CD14-positive monocyte (primary cell): ENCODE measurements at regions of chr21 and their contacts with region 1.

Region 1: GRCh38 chr21:42973991-42974831 is at the start of gene PKNOX1:
- DNase-seq: peak; percentile 98 to 99 (median 99)
- H3K4me3 ChIP-seq: peak within 1 kb of the TSS; percentile 84 to 91 (median 89)
- H3K4me3 Mint-ChIP-seq: peak within 1 kb of the TSS; percentile 93 to 94
- H3K27ac ChIP-seq: peak within 1 kb of the TSS; percentile 74 to 90
- H3K27ac Mint-ChIP-seq: peak within 1 kb of the TSS; percentile 84 to 96 (median 92)
- H3K4me1 ChIP-seq: peaks cover 13 to 21% of the 10 kb centered on the region in 2 donors
- H3K4me1 Mint-ChIP-seq: peaks cover 19% of the 10 kb centered on the region
- H3K27me3 ChIP-seq: no peaks in the 10 kb centered on the region
- H3K27me3 Mint-ChIP-seq: peaks cover 0 to 2% (median 1%) of the 10 kb centered on the region in 3 donors
- CTCF ChIP-seq: no peak
- polyA plus RNA-seq, gene PKNOX1: 9.2 to 11.8 (median 9.9) TPM

Region 2: DNA sequence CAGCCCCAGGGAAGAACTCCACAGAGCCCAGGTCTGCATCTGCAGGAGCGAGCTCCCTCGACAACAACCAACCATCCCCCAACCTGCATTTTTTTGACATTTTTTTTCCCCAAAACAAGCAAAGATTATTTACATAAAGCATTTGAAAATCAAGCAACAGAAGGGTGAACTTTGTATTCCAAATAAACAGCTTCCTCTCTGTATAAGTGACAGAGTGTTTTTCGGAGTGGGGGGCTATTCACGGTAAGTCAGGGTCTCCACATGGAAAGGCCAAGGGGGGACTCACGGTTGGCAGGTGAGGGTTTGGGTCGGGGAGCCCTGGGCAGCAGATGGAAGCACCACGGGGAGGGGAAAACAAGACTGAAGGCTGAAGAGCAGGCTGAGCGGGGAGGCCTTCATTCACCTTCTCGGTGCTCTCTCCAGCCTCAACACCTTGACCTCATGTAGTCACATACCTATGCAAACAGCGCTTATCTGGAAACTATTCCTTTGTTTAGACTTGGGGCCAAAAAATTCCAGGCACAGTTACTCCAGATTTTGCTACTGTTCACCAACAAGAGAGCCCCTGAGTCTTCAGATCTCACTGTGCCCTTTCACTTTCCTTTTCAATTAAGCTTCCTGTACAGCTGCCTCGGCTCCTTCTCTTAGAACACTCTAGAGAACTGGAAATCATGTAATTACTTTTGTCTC is 1047.9 kb before region 1 on chr21:
- intact Hi-C with region 1: no loop called
- DNase-seq: peak in 2 of 3 donors; percentile 54 to 58
- H3K4me3 ChIP-seq: peak overlapping the region; percentile 42 to 74 (median 42)
- H3K4me3 Mint-ChIP-seq: peak overlapping the region; percentile 88 to 94
- H3K27ac ChIP-seq: peak overlapping the region; percentile 70 to 94
- H3K27ac Mint-ChIP-seq: peak overlapping the region; percentile 95 to 100 (median 98)
- H3K4me1 ChIP-seq: peaks cover 49 to 53% of the 10 kb centered on the region in 2 donors
- H3K4me1 Mint-ChIP-seq: peaks cover 70% of the 10 kb centered on the region
- H3K27me3 ChIP-seq: no peaks in the 10 kb centered on the region
- H3K27me3 Mint-ChIP-seq: peaks cover under 1 to 4% (median 3%) of the 10 kb centered on the region in 3 donors
- CTCF ChIP-seq: no peak

Region 3: GRCh38 chr21:42695697-42696380 is 278.4 kb before region 1 on chr21:
- intact Hi-C with region 1: no loop called
- DNase-seq: no peak
- H3K4me3 ChIP-seq: no peak overlapping the region
- H3K4me3 Mint-ChIP-seq: no peak overlapping the region
- H3K27ac ChIP-seq: no peak overlapping the region
- H3K27ac Mint-ChIP-seq: no peak overlapping the region
- H3K4me1 ChIP-seq: no peaks in the 10 kb centered on the region
- H3K4me1 Mint-ChIP-seq: no peaks in the 10 kb centered on the region
- H3K27me3 ChIP-seq: no peaks in the 10 kb centered on the region
- H3K27me3 Mint-ChIP-seq: peaks cover 0 to 1% (median 0%) of the 10 kb centered on the region in 3 donors
- CTCF ChIP-seq: no peak

Region 4: DNA sequence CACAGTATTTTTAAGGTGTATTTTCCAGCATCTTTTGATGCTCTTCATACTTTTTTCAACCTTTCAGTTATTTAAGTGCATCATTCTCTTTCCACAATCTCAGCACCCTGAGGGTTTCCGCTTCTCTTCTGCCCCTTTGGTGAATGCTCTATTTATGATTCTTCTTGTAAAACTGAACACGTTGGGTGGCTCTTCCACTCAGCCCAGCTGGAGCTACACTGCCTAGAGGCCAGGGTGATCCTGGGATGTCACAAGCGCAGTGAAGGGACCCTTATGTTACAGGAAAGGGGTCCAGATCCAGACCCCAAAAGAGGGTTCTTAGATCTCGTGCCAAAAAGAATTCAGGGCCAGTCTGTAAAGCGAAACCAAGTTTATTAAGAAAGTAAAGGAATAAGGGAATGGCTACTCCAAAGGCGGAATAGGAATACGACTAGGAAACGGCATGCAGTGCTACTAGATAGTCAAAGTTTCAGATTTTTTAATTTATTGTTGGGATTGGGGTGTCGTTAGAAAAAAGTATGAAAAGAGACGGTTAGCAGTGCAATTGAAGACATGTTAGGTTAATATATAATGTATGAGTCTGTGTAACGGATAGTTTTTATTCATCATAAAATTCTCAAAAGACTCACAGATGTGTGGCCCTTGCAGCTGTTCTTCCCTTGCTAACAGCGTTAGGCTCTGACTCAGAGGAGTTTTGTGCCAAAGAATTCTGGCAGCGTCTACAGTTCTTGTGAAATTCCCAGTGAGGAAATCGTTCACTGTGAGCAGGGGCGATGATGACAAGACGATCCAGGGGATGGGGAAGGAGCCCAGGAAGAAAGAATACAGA is 34.4 kb before region 1 on chr21:
- intact Hi-C with region 1: no loop called
- DNase-seq: peak; percentile 37 to 68 (median 47)
- H3K4me3 ChIP-seq: no peak overlapping the region
- H3K4me3 Mint-ChIP-seq: no peak overlapping the region
- H3K27ac ChIP-seq: no peak overlapping the region
- H3K27ac Mint-ChIP-seq: peak overlapping the region in 1 of 7 donors; percentile 72
- H3K4me1 ChIP-seq: no peaks in the 10 kb centered on the region
- H3K4me1 Mint-ChIP-seq: peaks cover 22% of the 10 kb centered on the region
- H3K27me3 ChIP-seq: no peaks in the 10 kb centered on the region
- H3K27me3 Mint-ChIP-seq: peaks cover 0 to 6% (median 3%) of the 10 kb centered on the region in 3 donors
- CTCF ChIP-seq: no peak

Region 5: DNA sequence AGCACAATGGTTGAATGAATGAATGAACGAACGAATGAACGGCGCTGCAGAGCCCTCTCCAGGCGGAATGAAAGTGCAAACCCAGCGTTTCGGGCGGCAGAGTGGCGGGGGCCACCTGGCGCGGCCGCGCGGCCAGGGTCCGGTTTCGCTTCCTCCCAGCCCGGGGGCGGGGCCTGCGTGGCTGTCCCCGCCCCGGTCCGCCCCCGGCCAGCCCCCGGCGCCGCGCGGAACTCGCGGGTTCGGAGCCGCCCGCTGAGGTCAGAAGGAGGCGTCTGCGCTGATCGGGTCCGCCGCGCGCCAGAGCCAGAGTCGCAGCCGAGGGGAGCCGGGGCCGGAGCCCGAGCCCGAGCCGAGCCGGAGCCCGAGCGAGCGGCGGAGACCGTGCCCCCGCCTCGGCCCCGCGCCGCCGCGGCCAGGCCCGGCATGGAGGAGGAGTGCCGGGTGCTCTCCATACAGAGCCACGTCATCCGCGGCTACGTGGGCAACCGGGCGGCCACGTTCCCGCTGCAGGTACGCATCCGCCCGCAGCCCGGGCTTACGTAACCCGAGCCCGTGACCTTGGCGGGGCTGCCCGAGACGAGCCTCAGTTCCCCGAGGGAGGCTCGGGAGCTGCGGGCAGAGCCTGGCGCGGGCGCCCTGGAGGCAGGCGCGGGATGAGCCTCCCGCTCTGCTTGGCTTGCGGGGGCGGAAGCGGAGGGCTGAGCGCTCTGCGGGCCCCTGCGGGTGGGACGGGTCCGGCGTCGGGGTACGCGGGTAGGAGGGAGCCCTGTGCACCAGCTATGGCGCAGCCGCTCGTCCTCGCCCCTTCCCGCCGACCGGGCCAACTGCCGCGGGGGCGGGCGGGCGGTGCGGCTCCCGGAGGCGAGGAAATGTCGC is 744.9 kb after region 1 on chr21 and contains the start of gene PDXK:
- intact Hi-C with region 1: loop called in 1 of 2 experiments (anchors 10 kb)
- DNase-seq: peak; percentile 77 to 86 (median 83)
- H3K4me3 ChIP-seq: peak within 1 kb of the TSS; percentile 87 to 93 (median 90)
- H3K4me3 Mint-ChIP-seq: peak within 1 kb of the TSS; percentile 91 to 96
- H3K27ac ChIP-seq: peak within 1 kb of the TSS; percentile 65 to 92
- H3K27ac Mint-ChIP-seq: peak within 1 kb of the TSS; percentile 85 to 95 (median 90)
- H3K4me1 ChIP-seq: peaks cover 50 to 54% of the 10 kb centered on the region in 2 donors
- H3K4me1 Mint-ChIP-seq: peaks cover 50% of the 10 kb centered on the region
- H3K27me3 ChIP-seq: peaks cover 0 to 11% of the 10 kb centered on the region in 2 donors
- H3K27me3 Mint-ChIP-seq: peaks cover 17 to 34% (median 28%) of the 10 kb centered on the region in 3 donors
- CTCF ChIP-seq: no peak
- polyA plus RNA-seq, gene PDXK: 128 to 214 (median 210) TPM